ENCODE measurements at regions of chr1 and their contacts with region 1.

Region 1: GRCh38 chr1:27416387-27417111 is 24.1 kb downstream of the GPR3 start:
- DNase-seq: peak; percentile 64
- H3K4me3 ChIP-seq: no peak overlapping the region
- H3K27ac ChIP-seq: no peak overlapping the region
- H3K4me1 ChIP-seq: peaks cover 38% of the 10 kb centered on the region
- H3K27me3 ChIP-seq: no peaks in the 10 kb centered on the region
- CTCF ChIP-seq: peak; percentile 75 to 83

Region 2: DNA sequence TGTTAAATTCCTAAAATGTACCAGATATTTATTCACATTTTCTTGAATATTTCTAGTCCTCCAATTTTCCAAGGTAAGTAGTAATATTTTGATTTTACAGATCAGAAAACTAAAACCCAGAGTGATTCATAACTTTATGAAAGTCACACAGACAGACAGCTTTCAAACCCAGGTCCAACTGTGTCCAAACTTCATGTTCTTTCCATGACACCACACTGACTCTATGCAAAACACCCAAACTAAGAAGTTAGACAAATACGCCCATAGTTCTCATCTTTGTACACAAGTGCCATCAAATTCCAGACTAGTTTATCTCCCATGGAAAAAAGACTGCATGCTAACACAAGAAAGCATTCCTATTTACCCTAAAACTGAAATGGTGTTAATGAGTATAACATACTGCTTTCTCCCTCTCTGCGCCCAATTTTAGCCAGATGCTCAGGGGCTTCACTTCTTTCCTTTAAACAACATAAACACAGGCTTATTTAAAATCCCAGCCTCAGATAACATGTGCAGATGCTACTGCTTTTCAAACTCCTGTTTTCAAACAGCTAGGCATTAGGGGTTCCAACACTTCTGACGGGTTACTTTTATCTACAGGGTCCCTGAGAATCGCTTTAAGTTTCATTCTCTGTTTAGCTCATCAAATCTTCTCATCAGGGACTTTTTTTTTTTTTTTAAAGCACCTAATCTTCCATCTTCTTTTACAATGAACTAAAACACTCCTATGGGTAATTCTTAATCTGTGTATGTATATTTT is 28.8 kb after region 1 on chr1:
- CTCF ChIA-PET with region 1: no interaction called
- dilution Hi-C with region 1: loop called (anchors 5 kb)
- in situ Hi-C with region 1: no loop called
- intact Hi-C with region 1: no loop called
- DNase-seq: no peak
- H3K4me3 ChIP-seq: no peak overlapping the region
- H3K27ac ChIP-seq: no peak overlapping the region
- H3K4me1 ChIP-seq: no peaks in the 10 kb centered on the region
- H3K27me3 ChIP-seq: no peaks in the 10 kb centered on the region
- CTCF ChIP-seq: no peak

Region 3: DNA sequence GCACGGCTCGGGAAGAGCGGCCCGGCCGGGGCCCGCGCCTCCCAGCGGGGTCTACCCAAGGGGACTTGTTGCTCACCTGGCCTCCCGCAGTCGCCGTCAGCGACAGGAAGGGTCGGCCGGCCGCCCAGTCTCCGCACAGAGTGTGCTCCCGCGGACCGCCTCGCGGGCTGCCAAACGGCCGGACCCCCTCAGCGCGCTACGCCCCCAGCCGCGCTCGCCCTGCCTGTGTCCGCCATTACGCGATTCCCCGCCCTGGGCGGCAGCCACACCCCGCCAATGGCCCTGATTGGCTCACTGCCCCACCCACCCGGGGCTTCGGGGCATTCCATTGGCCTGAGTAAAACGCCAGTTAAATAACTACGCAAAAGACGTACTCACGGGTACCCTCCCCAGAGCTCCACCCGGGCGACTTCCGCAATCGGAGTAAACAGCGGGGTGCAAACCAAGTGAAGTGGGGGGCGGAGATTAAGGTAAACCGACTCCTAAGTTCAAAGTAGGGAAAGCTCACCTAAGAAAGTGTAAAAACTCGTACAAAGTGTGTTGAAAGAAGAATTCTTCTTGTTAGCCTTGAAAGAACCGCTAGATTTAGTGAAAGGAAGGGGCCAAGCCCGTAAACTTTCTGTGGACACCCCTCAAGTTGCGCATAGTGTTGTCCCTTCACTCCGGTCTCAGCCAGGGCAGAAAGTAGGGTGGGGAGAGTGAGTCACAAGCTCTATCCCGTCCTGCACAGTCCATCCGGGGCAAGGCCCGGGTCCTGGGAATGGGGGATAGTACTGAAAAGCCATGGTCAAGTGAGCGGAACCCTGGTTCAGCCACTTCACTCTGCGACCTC is 73.6 kb after region 1 on chr1 and contains the start of gene WASF2:
- CTCF ChIA-PET with region 1: interaction called, 3 read pairs
- dilution Hi-C with region 1: no loop called
- in situ Hi-C with region 1: no loop called
- intact Hi-C with region 1: loop called (anchors 1 kb)
- DNase-seq: peak; percentile 95
- H3K4me3 ChIP-seq: peak within 1 kb of the TSS; percentile 63 to 94 (median 94)
- H3K27ac ChIP-seq: peak within 1 kb of the TSS; percentile 97
- H3K4me1 ChIP-seq: peaks cover 18% of the 10 kb centered on the region
- H3K27me3 ChIP-seq: no peaks in the 10 kb centered on the region
- CTCF ChIP-seq: no peak
- total RNA-seq, gene WASF2: 32.2 to 138 TPM

Region 4: GRCh38 chr1:27536767-27537166 is 120.2 kb after region 1 on chr1:
- CTCF ChIA-PET with region 1: interaction called, 29 read pairs
- dilution Hi-C with region 1: no loop called
- in situ Hi-C with region 1: no loop called
- intact Hi-C with region 1: loop called (anchors 5 kb)
- DNase-seq: peak; percentile 74
- H3K4me3 ChIP-seq: no peak overlapping the region
- H3K27ac ChIP-seq: peak overlapping the region; percentile 56
- H3K4me1 ChIP-seq: peaks cover 66% of the 10 kb centered on the region
- H3K27me3 ChIP-seq: no peaks in the 10 kb centered on the region
- CTCF ChIP-seq: no peak

Region 5: GRCh38 chr1:27603681-27604578 is 187.4 kb after region 1 on chr1 and contains the start of gene AHDC1:
- CTCF ChIA-PET with region 1: interaction called, 5 read pairs
- dilution Hi-C with region 1: no loop called
- in situ Hi-C with region 1: no loop called
- intact Hi-C with region 1: loop called (anchors 1 kb)
- DNase-seq: peak; percentile 89
- H3K4me3 ChIP-seq: peak within 1 kb of the TSS; percentile 77 to 93 (median 78)
- H3K27ac ChIP-seq: peak within 1 kb of the TSS; percentile 33
- H3K4me1 ChIP-seq: peaks cover 44% of the 10 kb centered on the region
- H3K27me3 ChIP-seq: no peaks in the 10 kb centered on the region
- CTCF ChIP-seq: peak in 1 of 2 donors; percentile 14
- total RNA-seq, gene AHDC1: 35.3 to 51.8 TPM